Esophagus muscularis mucosa (tissue), 4 donors: ENCODE measurements at regions of chr4 and their contacts with region 1.

Region 1: DNA sequence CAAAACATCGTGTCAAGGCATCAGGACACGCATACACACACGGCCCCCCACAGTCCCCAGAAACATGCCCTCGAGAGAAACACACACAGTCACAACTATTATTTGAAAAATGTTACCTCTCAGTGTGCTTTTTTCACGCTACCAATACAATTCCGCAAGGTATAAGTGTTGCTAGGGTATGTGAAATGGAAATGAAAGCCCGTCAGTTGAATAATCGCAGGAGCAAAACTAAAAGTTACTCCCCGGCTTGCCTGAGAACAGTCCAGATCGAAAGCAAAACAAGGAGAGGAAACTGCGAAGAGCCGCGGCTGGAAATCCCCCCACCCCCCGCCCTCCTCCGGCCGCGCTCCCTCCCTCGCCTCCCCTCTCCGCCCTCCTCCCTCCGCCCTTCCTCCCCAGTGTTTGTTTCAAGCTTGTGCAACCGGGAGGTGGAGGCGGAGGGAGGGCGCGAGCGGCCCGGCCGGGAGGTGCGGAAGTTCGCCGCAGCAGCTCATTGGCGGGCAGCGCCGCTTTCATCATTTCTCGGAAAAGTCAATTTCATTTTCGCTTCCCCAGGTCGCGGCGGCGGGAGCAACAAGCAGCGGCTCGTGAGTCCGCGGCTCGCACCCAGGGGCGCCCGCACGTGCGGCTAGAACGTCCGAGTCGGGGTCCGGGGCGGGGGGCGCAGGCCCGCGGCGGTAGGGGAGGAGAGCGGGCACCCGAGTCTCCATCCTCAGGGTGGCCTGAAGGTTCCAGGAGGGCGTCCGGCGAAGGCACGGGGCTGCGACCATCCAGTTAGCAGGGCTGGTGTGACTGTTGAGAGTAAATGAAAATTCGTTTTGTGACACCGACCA is at the start of gene IRF2:
- DNase-seq: peak; percentile 99
- H3K4me3 ChIP-seq: peak within 1 kb of the TSS; percentile 68 to 93 (median 84)
- H3K27ac ChIP-seq: peak within 1 kb of the TSS; percentile 92 to 98 (median 95)
- H3K4me1 ChIP-seq: peaks cover 44 to 64% (median 55%) of the 10 kb centered on the region in 4 donors
- H3K27me3 ChIP-seq: no peaks in the 10 kb centered on the region
- CTCF ChIP-seq: peak in 2 of 3 experiments; percentile 16 to 30
- EP300 ChIP-seq: peak; percentile 70
- POLR2A ChIP-seq: peak; percentile 96
- total RNA-seq, gene IRF2: 32.3 to 50.1 (median 36.4) TPM

Region 2: DNA sequence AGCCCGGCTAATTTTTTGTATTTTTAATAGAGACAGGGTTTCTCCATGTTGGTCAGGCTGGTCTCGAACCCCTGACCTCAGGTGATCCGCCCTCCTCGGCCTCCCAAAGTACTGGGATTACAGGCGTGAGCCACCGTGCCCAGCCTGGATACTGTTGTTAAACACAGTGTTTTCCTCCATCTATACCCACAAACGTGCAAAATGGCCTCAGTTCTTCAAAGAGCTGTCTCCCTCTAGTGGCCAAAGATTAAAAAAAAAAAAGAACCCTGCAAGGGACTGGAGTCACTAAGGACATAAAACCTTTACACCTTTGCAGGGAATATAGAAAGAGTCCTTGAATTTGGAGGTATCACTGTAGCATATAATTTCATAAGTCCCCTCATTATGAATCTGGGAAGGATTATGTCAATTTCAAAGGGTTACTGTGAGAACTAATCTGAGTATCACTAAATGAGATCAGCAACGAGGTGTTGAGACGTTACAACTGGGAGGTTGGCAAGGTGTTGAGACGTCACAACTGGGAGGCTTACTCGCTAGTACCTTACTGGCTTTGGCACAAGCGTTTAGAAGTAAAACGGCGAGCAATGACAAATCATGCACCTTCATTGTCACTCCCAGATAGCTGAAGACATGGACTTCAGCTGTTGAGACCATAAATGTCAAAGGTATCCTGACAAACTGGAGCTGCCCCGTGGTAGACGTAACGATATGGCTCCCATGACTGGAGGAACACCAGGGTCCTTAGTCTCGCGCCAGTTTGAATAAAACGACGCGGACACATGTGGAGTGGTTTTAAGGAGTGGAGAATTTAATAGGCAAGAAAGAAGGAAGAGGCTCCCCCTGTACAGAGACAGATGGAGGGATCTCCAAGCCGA is 223.4 kb before region 1 on chr4:
- intact Hi-C with region 1: no loop called
- DNase-seq: no peak
- H3K4me3 ChIP-seq: no peak overlapping the region
- H3K27ac ChIP-seq: no peak overlapping the region
- H3K4me1 ChIP-seq: no peaks in the 10 kb centered on the region
- H3K27me3 ChIP-seq: no peaks in the 10 kb centered on the region
- CTCF ChIP-seq: peak; percentile 14 to 54 (median 29)
- EP300 ChIP-seq: no peak
- POLR2A ChIP-seq: no peak

Region 3: DNA sequence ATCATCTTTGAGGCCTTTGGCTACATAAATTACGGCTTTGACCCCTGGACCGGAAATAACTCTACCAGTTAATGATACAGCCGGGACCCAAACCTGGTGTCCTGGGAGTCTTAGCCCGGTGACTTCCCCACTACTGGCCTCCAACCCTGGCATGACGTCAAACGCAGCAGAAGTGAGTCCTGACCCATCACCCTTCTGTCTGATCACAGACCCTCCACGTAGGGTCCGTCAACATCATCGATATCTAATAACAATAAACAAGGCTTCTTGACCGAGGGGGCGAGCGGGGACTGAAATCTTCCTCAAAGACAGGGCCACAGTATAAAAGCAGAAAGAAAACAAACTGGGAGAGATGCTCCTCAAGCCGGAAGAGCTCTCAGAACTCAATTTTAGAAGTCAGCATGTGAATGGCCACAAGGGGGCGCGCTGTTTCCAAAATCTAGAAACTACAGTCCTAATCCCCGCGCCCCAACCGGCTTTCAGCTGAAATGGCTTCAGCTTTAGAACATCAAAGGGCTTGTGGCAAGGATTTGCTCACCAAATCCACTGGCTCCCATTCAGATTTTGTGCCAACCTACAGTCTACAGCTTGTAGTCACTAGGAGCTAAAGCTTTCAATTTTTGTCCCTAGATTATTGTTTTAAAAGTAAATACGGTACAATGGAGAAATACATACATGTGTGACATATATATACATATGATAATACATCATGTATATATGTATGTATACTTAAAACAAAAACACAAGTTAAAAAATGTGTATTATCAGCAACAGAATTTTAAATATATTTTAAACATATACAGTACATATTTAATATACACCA is 210.4 kb before region 1 on chr4:
- intact Hi-C with region 1: loop called (anchors 5 kb)
- DNase-seq: peak; percentile 98
- H3K4me3 ChIP-seq: peak overlapping the region in 1 of 4 donors; percentile 14
- H3K27ac ChIP-seq: no peak overlapping the region
- H3K4me1 ChIP-seq: peaks cover 0 to 7% (median 4%) of the 10 kb centered on the region in 4 donors
- H3K27me3 ChIP-seq: no peaks in the 10 kb centered on the region
- CTCF ChIP-seq: peak; percentile 85 to 91 (median 91)
- EP300 ChIP-seq: no peak
- POLR2A ChIP-seq: no peak